ENCODE measurements at regions of chr1 and their contacts with region 1.

Region 1: DNA sequence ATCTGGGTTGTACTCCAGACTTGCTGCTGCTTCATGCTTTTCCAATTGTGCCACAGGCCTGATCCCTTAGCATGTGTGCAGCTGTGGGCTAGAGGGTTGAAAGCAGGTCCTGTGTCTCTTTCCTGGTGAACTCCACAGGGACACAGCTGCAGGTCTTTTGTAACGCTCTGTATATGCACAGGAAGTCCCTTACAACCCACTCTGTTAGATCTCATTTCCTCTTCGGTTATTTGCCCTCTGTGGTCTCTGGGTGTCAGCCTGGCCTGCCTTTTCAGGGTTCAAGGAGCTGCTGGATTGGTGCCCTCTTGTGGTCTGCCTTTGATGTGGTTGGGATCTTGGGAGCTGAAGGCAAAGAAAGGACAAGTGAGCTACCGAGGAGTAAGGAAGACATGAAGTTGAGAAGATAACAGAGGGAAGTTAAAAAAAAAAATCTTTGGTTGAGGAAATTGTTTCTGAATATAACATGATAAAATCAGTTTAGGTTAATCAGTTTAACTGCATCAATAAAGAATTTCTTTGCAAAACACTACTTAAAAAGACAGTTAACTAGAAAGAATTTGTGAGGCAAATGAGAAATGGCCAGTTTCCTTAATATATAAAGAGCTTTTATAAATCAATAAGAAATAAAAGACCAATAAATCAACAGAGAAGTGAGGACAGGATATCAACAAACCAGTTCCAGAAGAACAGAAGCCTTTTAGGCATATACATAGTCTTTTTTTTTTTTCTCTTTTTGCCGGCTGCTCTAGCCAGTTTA is 44.1 kb downstream of the UCK2 start:
- DNase-seq: peak; percentile 82
- ATAC-seq: peak; percentile 94
- H3K4me3 Mint-ChIP-seq: peak overlapping the region; percentile 48
- H3K27ac Mint-ChIP-seq: peak overlapping the region; percentile 64
- H3K4me1 Mint-ChIP-seq: peaks cover 48% of the 10 kb centered on the region
- H3K27me3 Mint-ChIP-seq: peaks cover 6% of the 10 kb centered on the region

Region 2: GRCh38 chr1:165527251-165528007 is 344.1 kb before region 1 on chr1:
- CTCF ChIA-PET with region 1: no interaction called
- POLR2A ChIA-PET with region 1: no interaction called
- DNase-seq: no peak
- ATAC-seq: no peak
- H3K4me3 Mint-ChIP-seq: no peak overlapping the region
- H3K27ac Mint-ChIP-seq: no peak overlapping the region
- H3K4me1 Mint-ChIP-seq: no peaks in the 10 kb centered on the region
- H3K27me3 Mint-ChIP-seq: peaks cover 37% of the 10 kb centered on the region

Region 3: DNA sequence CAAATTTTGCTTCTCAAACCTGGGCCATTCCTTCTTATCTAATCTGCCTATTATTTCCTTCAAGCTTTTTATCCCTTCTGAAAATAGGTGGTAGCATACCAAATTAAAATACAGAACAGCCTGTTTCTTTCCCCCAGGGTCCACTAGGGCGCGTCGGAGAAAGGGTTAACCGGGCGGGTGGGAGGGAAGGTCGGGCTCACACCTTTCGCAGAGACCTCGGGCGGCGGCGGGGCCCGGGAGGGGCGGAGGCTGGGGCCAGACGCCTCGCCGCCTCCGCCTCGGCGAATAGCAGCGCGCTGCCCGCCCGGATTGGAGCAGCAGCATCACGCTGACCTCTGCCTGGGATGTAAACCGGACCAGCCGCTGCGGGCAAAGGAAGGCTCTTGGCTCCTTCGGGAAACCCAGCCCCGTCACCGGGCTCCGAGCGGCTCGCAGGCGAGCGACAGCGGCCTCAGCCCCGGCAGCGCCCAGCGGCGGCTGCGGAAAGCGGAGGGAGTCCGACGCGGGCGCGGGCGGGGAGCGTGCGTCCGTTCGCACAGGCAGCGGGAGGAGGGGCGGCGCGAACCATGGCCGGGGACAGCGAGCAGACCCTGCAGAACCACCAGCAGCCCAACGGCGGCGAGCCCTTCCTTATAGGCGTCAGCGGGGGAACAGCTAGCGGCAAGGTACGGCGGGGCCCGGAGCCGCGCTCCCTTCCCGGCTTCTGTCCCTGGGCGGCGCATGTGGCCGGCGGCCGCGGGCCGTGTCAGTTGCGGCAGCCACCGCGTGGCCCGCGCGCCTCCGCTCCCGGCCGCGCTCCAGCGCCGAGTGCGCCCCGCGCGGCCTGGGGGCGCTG is 44.0 kb before region 1 on chr1 and contains the start of gene UCK2:
- CTCF ChIA-PET with region 1: interaction called, 35 read pairs
- POLR2A ChIA-PET with region 1: interaction called, 3 read pairs
- DNase-seq: peak; percentile 63
- ATAC-seq: peak; percentile 78
- H3K4me3 Mint-ChIP-seq: peak within 1 kb of the TSS; percentile 88
- H3K27ac Mint-ChIP-seq: peak within 1 kb of the TSS; percentile 88
- H3K4me1 Mint-ChIP-seq: peaks cover 18% of the 10 kb centered on the region
- H3K27me3 Mint-ChIP-seq: peaks cover 10% of the 10 kb centered on the region
- total RNA-seq, gene UCK2: 28.4 to 32.4 TPM

Measured in activated CD8-positive, alpha-beta T cell treated with anti-CD3 and anti-CD28 coated beads, Interleukin-2, amount 10 ng/mL, durations not matched to agents 7 days and 5 days (primary cell).